Posterior vena cava (tissue), 2 donors: ENCODE measurements at regions of chr2 and their contacts with region 1.

Region 1: GRCh38 chr2:235746257-235747084 is 252.6 kb downstream of the AGAP1 start:
- DNase-seq: no peak

Region 2: DNA sequence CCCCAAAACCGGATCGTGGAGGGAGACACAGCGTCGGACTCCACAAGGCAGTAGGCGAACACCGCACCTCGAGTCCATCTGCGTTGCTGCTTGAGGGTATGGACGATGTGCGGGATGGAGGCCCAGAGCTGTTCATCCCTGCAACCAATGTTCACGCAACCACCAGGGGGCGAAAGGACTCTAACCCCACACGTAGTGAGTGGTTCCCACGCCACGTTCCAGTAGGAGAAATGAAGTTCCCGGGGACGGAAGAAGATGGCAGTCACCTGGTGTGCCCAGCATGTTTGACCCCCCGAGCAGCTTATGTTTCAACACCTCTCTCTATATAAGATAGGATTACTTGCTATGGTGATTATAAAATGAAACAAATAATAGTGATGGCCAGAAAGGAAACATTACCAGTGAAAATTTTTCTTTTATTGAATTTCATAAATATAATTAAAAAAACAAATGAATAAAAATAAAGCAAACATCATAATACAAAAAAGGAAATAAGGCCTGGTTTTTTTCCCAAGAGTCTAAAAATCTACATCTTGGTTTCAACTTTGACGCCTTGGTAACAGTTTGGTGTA is 610.4 kb before region 1 on chr2:
- intact Hi-C with region 1: loop called in 1 of 2 experiments (anchors 10 kb)
- DNase-seq: peak; percentile 88